ENCODE measurements at regions of chr17 and their contacts with region 1.

Region 1: GRCh38 chr17:17237026-17237799 is at the start of gene FLCN:
- DNase-seq: peak; percentile 76 to 94 (median 90)
- ATAC-seq: peak; percentile 90
- H3K4me3 ChIP-seq: peak within 1 kb of the TSS; percentile 80 to 94
- H3K4me3 Mint-ChIP-seq: peak within 1 kb of the TSS; percentile 95
- H3K27ac ChIP-seq: peak within 1 kb of the TSS; percentile 97 to 98
- H3K27ac Mint-ChIP-seq: peak within 1 kb of the TSS; percentile 99
- H3K4me1 ChIP-seq: peaks cover 23% of the 10 kb centered on the region
- H3K4me1 Mint-ChIP-seq: peaks cover 29% of the 10 kb centered on the region
- H3K27me3 ChIP-seq: no peaks in the 10 kb centered on the region
- H3K27me3 Mint-ChIP-seq: no peaks in the 10 kb centered on the region
- CTCF ChIP-seq: no peak
- total RNA-seq, gene FLCN: 13.4 to 14.6 TPM

Region 2: DNA sequence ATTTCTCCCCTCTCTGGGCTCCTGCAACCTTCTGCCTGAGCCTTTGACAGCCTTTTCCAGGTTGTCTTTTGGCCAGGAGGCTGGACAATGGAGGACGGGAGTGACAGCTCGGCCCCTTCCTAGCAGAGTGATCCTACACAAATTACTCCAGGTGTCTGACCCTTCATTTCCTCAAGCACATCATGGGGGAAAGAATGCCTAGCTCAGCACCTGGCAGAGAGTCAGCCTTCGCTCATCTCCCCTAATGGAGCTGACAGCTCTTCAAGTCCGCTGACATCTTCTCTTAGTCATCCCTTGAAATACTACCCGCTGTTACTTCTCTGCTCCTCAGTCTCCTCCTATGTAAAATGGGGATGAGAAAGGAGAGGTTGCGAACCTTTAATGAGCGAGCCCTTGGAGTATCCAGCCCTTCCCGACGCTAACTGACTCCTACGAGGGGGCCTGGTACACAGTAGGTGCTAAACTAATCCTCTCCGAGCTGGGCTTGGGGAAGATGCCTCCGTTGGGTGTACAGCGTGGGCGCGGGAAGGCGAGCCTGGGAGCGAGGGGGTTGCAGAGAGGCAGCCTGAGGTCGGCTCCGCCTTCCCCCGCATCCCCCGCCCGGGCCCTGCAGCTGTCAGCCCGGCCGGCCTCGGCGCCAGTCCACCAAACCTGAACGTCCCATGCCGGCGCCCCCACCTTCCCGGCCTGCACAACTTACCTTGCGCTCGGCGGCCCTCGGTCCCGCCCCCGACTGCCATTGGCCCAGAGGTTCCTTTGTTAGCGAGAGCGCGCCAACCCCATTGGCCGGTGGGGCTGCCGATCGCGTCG is 195.4 kb before region 1 on chr17:
- CTCF ChIA-PET with region 1: no interaction called
- POLR2A ChIA-PET with region 1: no interaction called
- intact Hi-C with region 1: loop called in 1 of 2 experiments (anchors 2 kb)
- DNase-seq: peak; percentile 93 to 99 (median 98)
- ATAC-seq: peak; percentile 97
- H3K4me3 ChIP-seq: peak overlapping the region; percentile 51 to 70
- H3K4me3 Mint-ChIP-seq: peak overlapping the region; percentile 70
- H3K27ac ChIP-seq: peak overlapping the region in 1 of 2 experiments; percentile 40
- H3K27ac Mint-ChIP-seq: peak overlapping the region; percentile 28
- H3K4me1 ChIP-seq: peaks cover 35% of the 10 kb centered on the region
- H3K4me1 Mint-ChIP-seq: peaks cover 44% of the 10 kb centered on the region
- H3K27me3 ChIP-seq: no peaks in the 10 kb centered on the region
- H3K27me3 Mint-ChIP-seq: no peaks in the 10 kb centered on the region
- CTCF ChIP-seq: no peak

Region 3: DNA sequence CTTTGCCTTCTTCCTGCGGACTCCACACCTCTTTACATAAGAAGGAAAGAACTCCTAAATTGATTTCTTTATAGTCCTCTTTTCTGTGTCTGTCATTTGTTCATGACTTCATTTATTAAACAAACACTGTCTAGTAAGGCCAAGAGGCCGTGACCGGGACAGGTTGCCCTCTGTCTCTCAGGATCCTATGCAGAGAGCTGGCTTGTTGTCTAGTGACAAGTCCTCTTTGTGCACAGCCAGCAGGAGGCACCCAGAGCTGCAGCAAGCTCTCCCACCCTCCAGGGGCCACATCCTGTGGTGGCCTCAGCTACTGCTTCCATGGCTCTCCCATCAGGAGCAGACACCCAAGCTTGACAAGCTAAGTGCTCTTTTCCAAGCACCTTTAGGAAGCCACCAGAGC is 81.6 kb before region 1 on chr17:
- CTCF ChIA-PET with region 1: no interaction called
- POLR2A ChIA-PET with region 1: no interaction called
- intact Hi-C with region 1: loop called in 1 of 2 experiments (anchors 2 kb)
- DNase-seq: peak in 1 of 9 experiments; percentile 23
- ATAC-seq: no peak
- H3K4me3 ChIP-seq: no peak overlapping the region
- H3K4me3 Mint-ChIP-seq: no peak overlapping the region
- H3K27ac ChIP-seq: no peak overlapping the region
- H3K27ac Mint-ChIP-seq: no peak overlapping the region
- H3K4me1 ChIP-seq: peaks cover 5% of the 10 kb centered on the region
- H3K4me1 Mint-ChIP-seq: peaks cover 23% of the 10 kb centered on the region
- H3K27me3 ChIP-seq: no peaks in the 10 kb centered on the region
- H3K27me3 Mint-ChIP-seq: no peaks in the 10 kb centered on the region
- CTCF ChIP-seq: no peak

Region 4: GRCh38 chr17:17206124-17206912 is 30.9 kb before region 1 on chr17 and contains the start of gene PLD6:
- CTCF ChIA-PET with region 1: no interaction called
- POLR2A ChIA-PET with region 1: interaction called, 6 read pairs
- intact Hi-C with region 1: loop called (anchors 1 kb)
- DNase-seq: peak; percentile 72 to 96 (median 94)
- ATAC-seq: peak; percentile 79
- H3K4me3 ChIP-seq: peak within 1 kb of the TSS; percentile 48 to 75
- H3K4me3 Mint-ChIP-seq: peak within 1 kb of the TSS; percentile 86
- H3K27ac ChIP-seq: peak within 1 kb of the TSS; percentile 41 to 59
- H3K27ac Mint-ChIP-seq: peak within 1 kb of the TSS; percentile 92
- H3K4me1 ChIP-seq: peaks cover 21% of the 10 kb centered on the region
- H3K4me1 Mint-ChIP-seq: peaks cover 29% of the 10 kb centered on the region
- H3K27me3 ChIP-seq: no peaks in the 10 kb centered on the region
- H3K27me3 Mint-ChIP-seq: no peaks in the 10 kb centered on the region
- CTCF ChIP-seq: no peak
- total RNA-seq, gene PLD6: 3.2 to 3.3 TPM

Region 5: GRCh38 chr17:17303010-17303846 is 66.0 kb after region 1 on chr17 and contains the start of gene NT5M:
- CTCF ChIA-PET with region 1: no interaction called
- POLR2A ChIA-PET with region 1: no interaction called
- intact Hi-C with region 1: loop called (anchors 2 kb)
- DNase-seq: peak in 8 of 9 experiments; percentile 52 to 82 (median 68)
- ATAC-seq: peak; percentile 54
- H3K4me3 ChIP-seq: peak within 1 kb of the TSS; percentile 44 to 54
- H3K4me3 Mint-ChIP-seq: peak within 1 kb of the TSS; percentile 90
- H3K27ac ChIP-seq: peak within 1 kb of the TSS; percentile 6 to 61
- H3K27ac Mint-ChIP-seq: peak within 1 kb of the TSS; percentile 88
- H3K4me1 ChIP-seq: peaks cover 38% of the 10 kb centered on the region
- H3K4me1 Mint-ChIP-seq: peaks cover 29% of the 10 kb centered on the region
- H3K27me3 ChIP-seq: peaks cover 0 to 4% of the 10 kb centered on the region in 2 experiments
- H3K27me3 Mint-ChIP-seq: peaks cover 2% of the 10 kb centered on the region
- CTCF ChIP-seq: no peak
- total RNA-seq, gene NT5M: 2.2 to 2.4 TPM

Region 6: DNA sequence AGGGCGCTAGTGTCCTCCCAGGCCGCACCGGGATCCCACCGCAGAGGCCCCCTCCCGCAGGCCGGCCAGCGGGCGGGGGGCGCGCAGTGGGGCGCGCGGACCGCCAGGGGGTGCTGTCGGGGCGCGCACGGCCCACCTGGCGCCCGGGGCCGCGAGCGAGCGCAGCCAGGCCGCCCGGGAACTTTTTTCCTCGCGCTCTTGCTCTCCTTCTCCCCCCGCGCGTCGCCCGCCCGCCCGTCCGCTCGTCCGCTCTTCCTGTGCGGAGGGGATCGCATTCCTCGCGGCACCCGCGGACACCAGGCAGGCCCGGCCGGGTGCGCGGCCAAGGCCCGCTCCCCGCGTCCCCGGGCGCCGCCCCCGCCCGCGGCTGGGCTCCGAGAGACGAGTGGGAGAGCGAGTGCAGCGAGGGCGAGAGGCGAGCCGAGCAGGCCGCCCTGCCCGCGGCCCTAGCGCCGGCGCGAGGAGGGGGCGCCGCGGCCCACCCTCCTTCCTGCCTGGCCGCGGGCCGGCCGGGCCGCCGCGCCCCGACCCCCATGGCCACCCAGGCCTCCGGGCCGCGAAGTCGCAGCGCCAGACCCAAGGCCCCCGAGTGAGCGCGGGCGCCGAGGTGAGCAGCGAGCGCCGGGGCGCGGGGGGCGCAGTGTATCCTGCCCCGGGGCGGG is 444.1 kb after region 1 on chr17 and contains the start of gene RAI1:
- CTCF ChIA-PET with region 1: no interaction called
- POLR2A ChIA-PET with region 1: no interaction called
- intact Hi-C with region 1: no loop called
- DNase-seq: peak; percentile 51 to 89 (median 73)
- ATAC-seq: peak; percentile 58
- H3K4me3 ChIP-seq: peak within 1 kb of the TSS; percentile 74
- H3K4me3 Mint-ChIP-seq: peak within 1 kb of the TSS; percentile 93
- H3K27ac ChIP-seq: peak within 1 kb of the TSS; percentile 67 to 90
- H3K27ac Mint-ChIP-seq: peak within 1 kb of the TSS; percentile 77
- H3K4me1 ChIP-seq: peaks cover 34% of the 10 kb centered on the region
- H3K4me1 Mint-ChIP-seq: peaks cover 34% of the 10 kb centered on the region
- H3K27me3 ChIP-seq: no peaks in the 10 kb centered on the region
- H3K27me3 Mint-ChIP-seq: no peaks in the 10 kb centered on the region
- CTCF ChIP-seq: peak; percentile 50
- total RNA-seq, gene RAI1: 22.9 to 23.5 TPM